ENCODE measurements at regions of chr3 and their contacts with region 1.

Region 1: DNA sequence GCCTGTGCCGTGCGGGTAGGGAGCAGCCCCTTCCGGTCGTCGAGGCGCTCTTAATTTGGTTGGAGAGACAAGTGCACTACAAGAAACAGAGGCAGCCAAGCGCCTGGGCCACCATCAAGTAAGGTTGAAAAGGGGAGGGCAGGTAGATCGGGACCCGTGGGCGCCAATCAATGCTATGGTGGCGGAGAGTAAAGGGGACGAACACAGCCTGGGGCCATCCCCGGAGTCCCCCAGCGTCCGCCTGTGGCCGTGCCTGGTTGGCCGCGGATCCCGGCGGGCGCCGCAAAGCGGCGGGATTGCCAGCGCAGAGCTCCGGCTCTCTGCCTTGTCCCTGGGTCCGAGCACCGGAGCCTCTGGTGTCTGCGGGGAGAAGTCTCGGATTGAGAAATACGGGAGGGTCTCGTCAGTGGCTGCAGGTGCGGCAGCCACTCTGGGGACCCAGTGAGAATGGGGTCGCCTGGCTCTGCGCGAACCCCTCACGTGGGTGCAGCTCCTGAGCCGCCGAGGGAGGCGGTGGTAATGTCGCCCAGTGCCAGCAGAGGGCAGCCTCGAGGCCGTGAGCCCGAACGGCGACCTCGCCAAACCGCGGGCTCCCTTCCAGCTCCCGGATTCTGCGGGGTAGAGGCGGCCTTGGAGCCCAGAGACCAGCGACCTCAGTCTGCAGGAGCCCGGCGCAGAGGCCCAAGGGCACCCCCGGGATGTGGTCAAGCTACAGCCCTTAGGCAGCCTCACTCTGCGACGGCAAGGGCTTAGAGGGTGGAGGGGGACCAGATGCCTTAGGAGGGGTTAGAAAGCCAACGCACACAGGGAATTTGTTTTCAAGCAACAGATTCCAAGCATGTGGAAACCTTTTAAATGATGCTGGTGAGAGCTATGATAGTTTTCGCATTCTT is 10.8 kb downstream of the FOXL2 start:
- DNase-seq: peak; percentile 89
- ATAC-seq: peak; percentile 82

Region 2: GRCh38 chr3:138950006-138950644 is 14.0 kb after region 1 on chr3:
- intact Hi-C with region 1: no loop called
- DNase-seq: no peak
- ATAC-seq: peak; percentile 43

Region 3: GRCh38 chr3:139043554-139044365 is 107.7 kb after region 1 on chr3:
- intact Hi-C with region 1: no loop called
- DNase-seq: no peak
- ATAC-seq: no peak

Region 4: DNA sequence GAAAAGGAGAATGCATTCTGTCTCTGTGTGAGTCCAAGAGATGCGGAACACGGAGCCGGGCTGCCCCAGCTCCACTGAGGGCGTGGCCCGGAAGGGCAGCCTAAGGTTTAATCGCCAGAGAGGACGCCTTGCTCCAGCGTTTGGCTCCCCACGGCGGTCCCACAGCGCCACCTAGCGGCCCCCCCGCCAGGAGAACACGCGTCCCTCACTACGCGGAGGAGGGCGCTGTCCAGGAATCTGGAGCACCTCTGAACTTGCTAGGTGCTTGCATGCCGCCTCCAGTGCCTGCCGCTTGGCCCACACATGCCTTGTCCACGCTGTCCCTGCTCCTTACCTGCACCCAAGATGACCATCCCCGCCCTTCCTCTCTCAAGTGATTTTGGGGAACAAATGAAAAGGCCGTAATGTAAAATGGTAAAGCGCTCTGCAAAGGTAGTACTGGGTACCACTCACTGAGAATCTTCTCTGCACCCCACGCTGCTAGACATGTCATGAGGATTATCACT is 393.3 kb after region 1 on chr3:
- intact Hi-C with region 1: loop called (anchors 2 kb)
- DNase-seq: peak; percentile 93
- ATAC-seq: peak; percentile 90

Measured in Right ventricle myocardium inferior (tissue), 1 donor.